Caco-2 (cell line): ENCODE measurements at regions of chr2 and their contacts with region 1.

Region 1: GRCh38 chr2:138827426-138828054 is 47.4 kb upstream of the NXPH2 start:
- DNase-seq: peak; percentile 46 to 60
- H3K4me3 ChIP-seq: no peak overlapping the region
- H3K4me3 Mint-ChIP-seq: no peak overlapping the region
- H3K27ac Mint-ChIP-seq: no peak overlapping the region
- H3K4me1 ChIP-seq: no peaks in the 10 kb centered on the region
- H3K4me1 Mint-ChIP-seq: no peaks in the 10 kb centered on the region
- H3K27me3 ChIP-seq: no peaks in the 10 kb centered on the region
- H3K27me3 Mint-ChIP-seq: peaks cover 4% of the 10 kb centered on the region
- CTCF ChIP-seq: peak; percentile 71 to 75

Region 2: GRCh38 chr2:137888845-137889244 is 938.7 kb before region 1 on chr2:
- CTCF ChIA-PET with region 1: interaction called, 40 read pairs
- POLR2A ChIA-PET with region 1: no interaction called
- intact Hi-C with region 1: loop called (anchors 1 kb)
- DNase-seq: peak; percentile 75 to 76
- H3K4me3 ChIP-seq: no peak overlapping the region
- H3K4me3 Mint-ChIP-seq: no peak overlapping the region
- H3K27ac Mint-ChIP-seq: no peak overlapping the region
- H3K4me1 ChIP-seq: peaks cover 12% of the 10 kb centered on the region
- H3K4me1 Mint-ChIP-seq: peaks cover 11% of the 10 kb centered on the region
- H3K27me3 ChIP-seq: no peaks in the 10 kb centered on the region
- H3K27me3 Mint-ChIP-seq: no peaks in the 10 kb centered on the region
- CTCF ChIP-seq: peak; percentile 69 to 81

Region 3: DNA sequence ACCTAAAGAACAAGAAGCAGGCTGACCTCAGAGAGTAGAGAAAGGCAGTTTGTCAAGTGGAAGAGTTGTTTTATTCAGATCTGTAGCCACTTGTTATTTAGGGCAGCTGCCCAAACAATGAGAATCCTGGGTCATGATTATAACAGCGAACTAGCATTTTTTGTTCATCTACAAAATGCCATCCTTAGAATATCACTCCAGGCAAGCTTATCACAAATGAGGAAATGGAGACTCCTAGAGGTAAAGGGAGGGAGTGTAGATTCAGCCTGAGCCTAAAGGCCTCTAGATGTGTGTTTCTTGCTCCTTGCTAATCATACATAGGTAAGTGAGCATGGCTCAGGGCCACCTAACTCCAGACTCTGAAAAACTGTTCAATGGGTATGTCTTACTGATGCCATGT is 737.2 kb before region 1 on chr2:
- CTCF ChIA-PET with region 1: no interaction called
- POLR2A ChIA-PET with region 1: no interaction called
- intact Hi-C with region 1: loop called (anchors 10 kb)
- DNase-seq: peak in 1 of 2 experiments; percentile 36
- H3K4me3 ChIP-seq: no peak overlapping the region
- H3K4me3 Mint-ChIP-seq: no peak overlapping the region
- H3K27ac Mint-ChIP-seq: peak overlapping the region; percentile 11
- H3K4me1 ChIP-seq: peaks cover 10% of the 10 kb centered on the region
- H3K4me1 Mint-ChIP-seq: no peaks in the 10 kb centered on the region
- H3K27me3 ChIP-seq: no peaks in the 10 kb centered on the region
- H3K27me3 Mint-ChIP-seq: no peaks in the 10 kb centered on the region
- CTCF ChIP-seq: peak in 1 of 2 experiments; percentile 42

Region 4: GRCh38 chr2:138373993-138374408 is 453.5 kb before region 1 on chr2:
- CTCF ChIA-PET with region 1: no interaction called
- POLR2A ChIA-PET with region 1: no interaction called
- intact Hi-C with region 1: loop called (anchors 2 kb)
- DNase-seq: peak in 1 of 2 experiments; percentile 43
- H3K4me3 ChIP-seq: no peak overlapping the region
- H3K4me3 Mint-ChIP-seq: no peak overlapping the region
- H3K27ac Mint-ChIP-seq: no peak overlapping the region
- H3K4me1 ChIP-seq: no peaks in the 10 kb centered on the region
- H3K4me1 Mint-ChIP-seq: peaks cover 6% of the 10 kb centered on the region
- H3K27me3 ChIP-seq: no peaks in the 10 kb centered on the region
- H3K27me3 Mint-ChIP-seq: no peaks in the 10 kb centered on the region
- CTCF ChIP-seq: peak; percentile 75 to 80

Region 5: GRCh38 chr2:138727956-138728355 is 99.6 kb before region 1 on chr2:
- CTCF ChIA-PET with region 1: interaction called, 3 read pairs
- POLR2A ChIA-PET with region 1: no interaction called
- intact Hi-C with region 1: loop called (anchors 2 kb)
- DNase-seq: no peak
- H3K4me3 ChIP-seq: no peak overlapping the region
- H3K4me3 Mint-ChIP-seq: no peak overlapping the region
- H3K27ac Mint-ChIP-seq: no peak overlapping the region
- H3K4me1 ChIP-seq: peaks cover 28% of the 10 kb centered on the region
- H3K4me1 Mint-ChIP-seq: peaks cover 7% of the 10 kb centered on the region
- H3K27me3 ChIP-seq: no peaks in the 10 kb centered on the region
- H3K27me3 Mint-ChIP-seq: no peaks in the 10 kb centered on the region
- CTCF ChIP-seq: no peak

Region 6: DNA sequence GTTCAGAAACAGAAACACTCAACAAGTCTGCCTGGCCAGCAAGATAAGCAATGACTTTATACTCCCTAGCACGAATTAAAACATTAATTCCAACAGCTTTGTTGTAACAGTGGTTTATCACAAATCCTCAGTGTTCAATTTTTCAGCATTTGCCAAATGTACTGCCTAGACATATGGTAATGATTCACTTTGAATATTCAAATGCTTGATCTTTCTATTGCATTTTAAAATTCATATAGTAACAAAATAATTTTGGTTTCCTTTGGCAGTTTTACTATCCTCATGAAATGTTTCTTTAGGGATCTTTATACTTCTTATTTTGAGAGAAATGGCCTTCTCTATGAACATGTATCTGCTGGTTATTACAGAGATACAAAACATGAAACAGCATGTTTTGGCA is 804.4 kb after region 1 on chr2:
- CTCF ChIA-PET with region 1: no interaction called
- POLR2A ChIA-PET with region 1: no interaction called
- intact Hi-C with region 1: no loop called
- DNase-seq: no peak
- H3K4me3 ChIP-seq: no peak overlapping the region
- H3K4me3 Mint-ChIP-seq: no peak overlapping the region
- H3K27ac Mint-ChIP-seq: no peak overlapping the region
- H3K4me1 ChIP-seq: no peaks in the 10 kb centered on the region
- H3K4me1 Mint-ChIP-seq: no peaks in the 10 kb centered on the region
- H3K27me3 ChIP-seq: no peaks in the 10 kb centered on the region
- H3K27me3 Mint-ChIP-seq: no peaks in the 10 kb centered on the region
- CTCF ChIP-seq: no peak